ENCODE measurements at regions of chr14 and their contacts with region 1.

Region 1: GRCh38 chr14:61247935-61248334 is 33.2 kb downstream of the TMEM30B start:
- DNase-seq: peak; percentile 88

Region 2: DNA sequence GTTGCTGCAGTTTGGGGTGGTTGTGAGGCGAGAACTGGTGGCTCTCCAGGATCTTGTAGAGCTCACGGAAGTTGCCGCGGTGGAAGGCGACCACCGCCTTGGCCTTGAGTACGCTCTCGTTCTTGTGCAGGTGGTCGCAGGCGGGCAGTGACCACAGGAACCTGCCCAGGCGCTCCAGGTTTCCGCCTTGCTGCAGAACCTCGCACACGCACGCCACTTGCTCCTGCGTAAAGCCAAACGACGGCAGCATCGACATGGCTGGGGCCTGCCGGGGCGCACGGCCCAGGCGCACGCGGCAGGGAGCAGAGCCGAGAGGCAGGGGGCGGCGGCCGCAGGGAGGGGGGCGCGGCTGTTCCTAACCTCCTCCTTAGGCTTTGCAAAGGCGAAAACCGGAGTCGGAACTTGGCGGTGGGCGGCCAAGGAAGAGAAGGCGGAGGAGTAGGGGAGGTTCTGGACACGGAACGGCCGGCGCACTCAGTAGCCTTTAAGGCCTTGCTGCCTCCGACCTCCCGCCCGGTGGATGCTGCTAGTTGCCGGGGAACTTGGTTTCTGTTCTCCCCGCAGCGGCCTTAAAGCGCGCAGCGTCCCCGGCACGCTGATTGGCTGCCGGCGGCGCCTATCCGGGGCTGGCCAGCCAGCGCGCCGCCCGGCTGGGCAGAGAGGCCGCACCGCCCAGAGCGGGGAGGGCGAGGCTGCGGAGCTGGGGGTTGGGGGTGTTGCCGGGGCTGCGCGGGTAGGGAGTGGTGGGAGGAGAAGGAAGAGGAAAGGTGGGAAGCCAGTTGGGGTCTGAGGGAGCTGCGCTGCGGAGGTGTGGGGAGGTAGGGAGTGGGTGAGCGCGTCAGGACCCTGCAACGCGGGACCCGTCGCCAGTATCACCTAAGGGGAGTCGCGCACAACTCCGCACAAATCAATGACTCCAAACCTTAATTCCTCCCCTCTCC is 598.7 kb before region 1 on chr14 and contains the start of gene SIX1:
- in situ Hi-C with region 1: loop called (anchors 25 kb)
- DNase-seq: peak; percentile 81
- total RNA-seq, gene SIX1: 15.2 and 22.9 TPM in 2 replicates

Measured in Caki2 (cell line).